ENCODE measurements at regions of chr19 and their contacts with region 1.

Region 1: DNA sequence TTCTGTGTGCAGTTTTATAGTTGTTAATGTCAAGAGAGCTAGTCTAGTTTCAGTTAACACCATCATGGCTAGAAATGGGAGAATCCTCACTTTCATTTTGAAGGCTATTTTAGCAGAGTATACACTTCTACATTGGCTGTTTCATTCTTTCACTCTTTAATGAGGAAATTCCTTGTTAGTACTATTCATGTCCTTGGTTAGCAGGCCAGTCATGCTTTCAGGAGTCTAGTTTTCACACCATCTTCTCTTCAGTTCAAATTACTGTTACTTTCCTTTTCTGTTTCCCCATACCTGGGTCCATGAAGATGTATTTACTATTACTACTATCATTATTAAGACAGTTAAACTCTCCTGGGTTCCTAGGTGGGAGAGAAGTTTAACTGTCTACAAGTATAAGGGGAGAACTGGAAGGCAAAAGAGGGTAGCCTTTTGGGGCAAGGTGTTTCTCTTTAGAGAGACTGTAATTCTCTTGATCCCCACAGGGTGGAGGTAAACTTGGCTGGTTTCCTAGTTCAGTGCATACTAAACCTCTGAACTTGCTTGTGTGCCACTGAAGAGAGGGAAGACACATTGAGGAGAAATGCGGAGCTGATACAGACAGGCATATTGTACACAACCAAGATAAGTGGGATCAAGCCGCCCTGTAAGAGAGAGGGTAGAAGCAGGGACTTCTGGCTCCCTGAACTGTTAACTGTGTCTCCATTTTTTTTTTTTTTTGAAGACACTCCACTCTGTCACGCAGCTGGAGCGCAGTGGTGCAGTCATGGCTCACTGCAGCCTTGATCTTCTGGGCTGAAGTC is 41.3 kb upstream of the IGFL4 start:
- DNase-seq: peak in 1 of 2 donors; percentile 62
- H3K4me3 ChIP-seq: no peak overlapping the region
- H3K27ac ChIP-seq: no peak overlapping the region
- H3K4me1 ChIP-seq: peaks cover 4 to 7% (median 5%) of the 10 kb centered on the region in 4 donors
- H3K27me3 ChIP-seq: peaks cover 4 to 47% (median 27%) of the 10 kb centered on the region in 3 donors
- CTCF ChIP-seq: peak in 5 of 7 experiments; percentile 54 to 86 (median 59)
- EP300 ChIP-seq: no peak
- POLR2A ChIP-seq: no peak

Region 2: GRCh38 chr19:45922281-45922680 is 159.8 kb before region 1 on chr19:
- intact Hi-C with region 1: no loop called
- DNase-seq: no peak
- H3K4me3 ChIP-seq: no peak overlapping the region
- H3K27ac ChIP-seq: no peak overlapping the region
- H3K4me1 ChIP-seq: no peaks in the 10 kb centered on the region
- H3K27me3 ChIP-seq: peaks cover 0 to 26% (median 5%) of the 10 kb centered on the region in 3 donors
- CTCF ChIP-seq: no peak
- EP300 ChIP-seq: no peak
- POLR2A ChIP-seq: no peak

Region 3: GRCh38 chr19:46159418-46160232 is 77.5 kb after region 1 on chr19:
- intact Hi-C with region 1: no loop called
- DNase-seq: peak in 1 of 2 donors; percentile 15
- H3K4me3 ChIP-seq: no peak overlapping the region
- H3K27ac ChIP-seq: no peak overlapping the region
- H3K4me1 ChIP-seq: peaks cover 0 to 6% (median 0%) of the 10 kb centered on the region in 4 donors
- H3K27me3 ChIP-seq: peaks cover 0 to 13% (median 0%) of the 10 kb centered on the region in 3 donors
- CTCF ChIP-seq: no peak
- EP300 ChIP-seq: no peak
- POLR2A ChIP-seq: no peak

Region 4: DNA sequence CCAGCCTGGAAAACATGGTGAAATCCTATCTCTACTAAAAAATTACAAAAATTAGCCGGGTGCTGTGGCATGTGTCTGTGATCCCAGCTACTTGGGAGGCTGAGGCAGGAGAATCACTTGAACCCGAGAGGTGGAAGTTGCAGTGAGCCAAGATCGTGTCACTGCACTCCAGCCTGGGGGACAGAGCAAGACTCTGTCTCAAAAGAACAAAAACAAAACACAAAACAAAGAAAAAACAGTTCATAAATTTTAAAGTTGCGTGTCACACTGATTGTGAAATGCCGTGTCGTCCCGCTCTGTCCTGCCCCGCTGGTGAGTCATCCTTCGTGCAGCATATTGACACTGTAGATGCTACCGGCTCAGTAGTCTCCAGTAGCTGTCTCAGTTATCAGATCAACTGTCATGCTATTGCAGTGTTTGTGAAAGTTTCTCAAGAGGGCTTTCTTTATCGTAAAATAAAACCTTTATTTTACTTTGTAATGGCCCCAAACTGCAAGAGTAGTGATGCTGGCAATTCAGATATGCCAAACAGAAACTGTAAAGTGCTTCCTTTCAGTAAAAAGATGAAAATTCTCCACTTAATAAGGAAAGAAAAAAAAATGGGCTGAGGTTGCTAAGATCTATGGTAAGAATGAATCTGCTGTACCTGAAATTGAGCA is 111.0 kb after region 1 on chr19:
- intact Hi-C with region 1: loop called (anchors 5 kb)
- DNase-seq: no peak
- H3K4me3 ChIP-seq: no peak overlapping the region
- H3K27ac ChIP-seq: no peak overlapping the region
- H3K4me1 ChIP-seq: peaks cover 0 to 7% (median 0%) of the 10 kb centered on the region in 4 donors
- H3K27me3 ChIP-seq: peaks cover 11 to 63% (median 29%) of the 10 kb centered on the region in 3 donors
- CTCF ChIP-seq: no peak
- EP300 ChIP-seq: no peak
- POLR2A ChIP-seq: no peak

Region 5: GRCh38 chr19:46614114-46614722 is 532.1 kb after region 1 on chr19:
- intact Hi-C with region 1: no loop called
- DNase-seq: peak; percentile 88 to 93
- H3K4me3 ChIP-seq: no peak overlapping the region
- H3K27ac ChIP-seq: peak overlapping the region in 1 of 5 donors; percentile 2
- H3K4me1 ChIP-seq: peaks cover 22 to 45% (median 27%) of the 10 kb centered on the region in 4 donors
- H3K27me3 ChIP-seq: no peaks in the 10 kb centered on the region
- CTCF ChIP-seq: peak in 6 of 7 experiments; percentile 54 to 91 (median 86)
- EP300 ChIP-seq: no peak
- POLR2A ChIP-seq: no peak

Measured in stomach (tissue), 19 donors.